Dorsolateral prefrontal cortex (tissue), 120 donors: ENCODE measurements at regions of chr18 and their contacts with region 1.

Region 1: GRCh38 chr18:50356036-50356945 is 18.6 kb upstream of the SKA1 start:
- DNase-seq: no peak
- H3K4me3 ChIP-seq: no peak overlapping the region
- H3K27ac ChIP-seq: no peak overlapping the region
- H3K27me3 ChIP-seq: peaks cover 0 to 24% (median 0%) of the 10 kb centered on the region in 45 donors
- CTCF ChIP-seq: no peak

Region 2: GRCh38 chr18:49819823-49820671 is 536.2 kb before region 1 on chr18:
- intact Hi-C with region 1: loop called in 1 of 2 experiments (anchors 5 kb)
- DNase-seq: no peak
- H3K4me3 ChIP-seq: no peak overlapping the region
- H3K27ac ChIP-seq: no peak overlapping the region
- H3K27me3 ChIP-seq: no peaks in the 10 kb centered on the region
- CTCF ChIP-seq: no peak

Region 3: DNA sequence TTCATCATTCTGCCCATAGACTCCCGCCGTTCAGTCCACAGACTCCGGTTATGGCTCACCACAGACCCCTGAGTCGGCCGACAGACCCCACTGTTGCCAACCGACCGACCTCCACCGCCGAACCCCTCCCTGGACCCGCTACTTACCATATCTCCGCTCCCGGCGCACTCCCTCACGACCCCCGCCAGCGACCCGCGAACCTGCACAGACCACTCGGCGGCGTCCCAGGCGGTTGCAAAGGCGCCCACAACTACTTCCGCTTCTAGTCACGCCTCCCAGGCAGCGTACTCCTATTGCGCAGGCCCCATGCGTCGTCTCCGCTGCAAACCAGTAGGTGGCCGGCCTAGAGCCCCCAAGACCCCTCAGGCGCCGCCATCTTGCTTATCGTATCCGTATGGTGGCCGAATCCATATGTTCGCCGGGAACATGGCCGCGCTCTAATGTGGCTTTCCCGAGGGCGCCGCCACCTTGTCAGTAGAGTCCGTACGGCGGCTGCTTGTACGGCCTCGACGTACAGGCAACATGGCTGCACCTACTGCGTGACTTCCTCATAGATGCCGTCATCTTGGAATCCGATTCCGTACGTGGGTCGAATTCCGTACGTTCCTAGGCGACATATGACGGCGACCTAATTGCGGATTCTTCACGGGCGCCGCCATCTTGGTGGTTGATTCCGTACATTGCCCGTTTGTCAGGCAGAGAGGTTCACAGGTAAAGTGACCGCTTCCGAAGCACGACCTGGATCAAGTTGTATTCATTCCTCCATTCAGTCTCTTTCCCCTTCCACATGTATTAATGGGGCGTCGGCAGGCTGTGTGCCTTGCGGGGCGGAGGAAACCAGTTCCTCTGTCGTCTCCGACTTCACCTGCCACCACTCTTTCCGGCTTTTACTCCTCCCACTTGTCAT is 68.6 kb before region 1 on chr18 and contains the start of gene CXXC1:
- intact Hi-C with region 1: loop called (anchors 5 to 10 kb)
- DNase-seq: peak; percentile 97 to 100 (median 99)
- H3K4me3 ChIP-seq: peak within 1 kb of the TSS; percentile 52 to 98 (median 83)
- H3K27ac ChIP-seq: peak within 1 kb of the TSS; percentile 68 to 98 (median 93)
- H3K27me3 ChIP-seq: no peaks in the 10 kb centered on the region
- CTCF ChIP-seq: peak in 52 of 56 donors; percentile 25 to 70 (median 53)
- total RNA-seq, gene CXXC1: 39.4 to 103 (median 69.4) TPM

Region 4: DNA sequence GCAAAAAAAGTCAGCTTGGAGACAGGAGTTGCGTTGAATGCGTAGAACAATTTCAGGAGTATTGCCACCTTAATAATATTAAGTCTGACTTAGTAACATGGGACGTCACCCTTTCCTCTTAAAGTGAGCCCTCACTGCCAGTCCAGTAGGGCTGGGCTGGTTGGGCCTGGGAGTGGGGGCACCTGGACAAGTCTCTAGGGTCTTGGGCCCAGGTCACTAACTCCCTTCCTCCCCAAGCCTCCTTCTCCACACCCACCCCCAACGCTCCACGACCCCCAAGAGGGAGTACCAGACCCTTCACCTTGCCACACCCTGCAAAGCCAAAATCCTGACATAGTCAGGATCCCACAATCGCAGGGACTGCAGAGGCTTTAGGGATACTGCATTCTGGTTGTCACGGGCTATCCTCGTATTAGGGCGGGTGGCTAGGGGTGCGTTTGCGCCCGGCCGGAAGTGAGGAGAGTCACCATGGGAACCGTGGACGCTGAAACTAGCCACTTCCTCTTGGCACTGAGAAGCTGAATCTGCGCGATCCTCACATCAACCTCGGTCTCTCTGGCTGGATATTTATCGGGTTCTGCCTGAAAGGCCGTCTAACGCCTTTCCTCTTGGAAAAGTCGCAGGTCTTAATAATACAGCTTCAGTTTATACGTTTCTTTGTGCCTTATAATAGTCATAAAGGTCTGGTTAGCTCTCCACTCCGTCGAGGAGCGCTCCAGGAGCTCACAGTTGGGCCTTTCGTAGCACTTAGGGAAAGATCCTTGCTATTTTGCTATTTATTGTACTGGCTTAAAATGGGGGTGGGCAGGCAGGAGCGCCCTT is 58.5 kb before region 1 on chr18:
- intact Hi-C with region 1: loop called in 1 of 2 experiments (anchors 10 kb)
- DNase-seq: peak in 8 of 10 donors; percentile 50 to 82 (median 73)
- H3K4me3 ChIP-seq: peak overlapping the region; percentile 33 to 78 (median 62)
- H3K27ac ChIP-seq: peak overlapping the region in 2 of 59 donors; percentile 21 to 54
- H3K27me3 ChIP-seq: peaks cover 0 to 19% (median 0%) of the 10 kb centered on the region in 45 donors
- CTCF ChIP-seq: no peak